Activated B cell treated with CpG ODN at 0.5 μM for 24 hours (primary cell): ENCODE measurements at regions of chr6 and their contacts with region 1.

Region 1: GRCh38 chr6:42563697-42564505 is at the start of gene UBR2:
- DNase-seq: peak; percentile 73
- ATAC-seq: peak; percentile 96
- H3K4me3 Mint-ChIP-seq: peak within 1 kb of the TSS; percentile 92
- H3K27ac Mint-ChIP-seq: peak within 1 kb of the TSS; percentile 92
- H3K4me1 Mint-ChIP-seq: peaks cover 43% of the 10 kb centered on the region
- H3K27me3 Mint-ChIP-seq: no peaks in the 10 kb centered on the region
- CTCF ChIP-seq: no peak
- total RNA-seq, gene UBR2: 34.3 and 40.8 TPM in 2 replicates

Region 2: GRCh38 chr6:42269553-42269952 is 294.3 kb before region 1 on chr6:
- CTCF ChIA-PET with region 1: no interaction called
- POLR2A ChIA-PET with region 1: no interaction called
- intact Hi-C with region 1: no loop called
- DNase-seq: no peak
- ATAC-seq: peak; percentile 97
- H3K4me3 Mint-ChIP-seq: no peak overlapping the region
- H3K27ac Mint-ChIP-seq: peak overlapping the region; percentile 53
- H3K4me1 Mint-ChIP-seq: peaks cover 20% of the 10 kb centered on the region
- H3K27me3 Mint-ChIP-seq: no peaks in the 10 kb centered on the region
- CTCF ChIP-seq: no peak

Region 3: GRCh38 chr6:42294759-42295158 is 269.1 kb before region 1 on chr6:
- CTCF ChIA-PET with region 1: no interaction called
- POLR2A ChIA-PET with region 1: no interaction called
- intact Hi-C with region 1: no loop called
- DNase-seq: no peak
- ATAC-seq: no peak
- H3K4me3 Mint-ChIP-seq: no peak overlapping the region
- H3K27ac Mint-ChIP-seq: no peak overlapping the region
- H3K4me1 Mint-ChIP-seq: peaks cover 6% of the 10 kb centered on the region
- H3K27me3 Mint-ChIP-seq: no peaks in the 10 kb centered on the region
- CTCF ChIP-seq: no peak

Region 4: GRCh38 chr6:42460883-42461282 is 103.0 kb before region 1 on chr6:
- CTCF ChIA-PET with region 1: no interaction called
- POLR2A ChIA-PET with region 1: no interaction called
- intact Hi-C with region 1: no loop called
- DNase-seq: no peak
- ATAC-seq: no peak
- H3K4me3 Mint-ChIP-seq: no peak overlapping the region
- H3K27ac Mint-ChIP-seq: no peak overlapping the region
- H3K4me1 Mint-ChIP-seq: no peaks in the 10 kb centered on the region
- H3K27me3 Mint-ChIP-seq: peaks cover 4% of the 10 kb centered on the region
- CTCF ChIP-seq: no peak

Region 5: GRCh38 chr6:43516697-43517504 is 953.0 kb after region 1 on chr6 and contains the starts of genes POLR1C and YIPF3:
- CTCF ChIA-PET with region 1: no interaction called
- POLR2A ChIA-PET with region 1: no interaction called
- intact Hi-C with region 1: loop called (anchors 10 kb)
- DNase-seq: peak; percentile 87
- ATAC-seq: peak; percentile 94
- H3K4me3 Mint-ChIP-seq: no peak within 1 kb of the TSS
- H3K27ac Mint-ChIP-seq: peak within 1 kb of the TSS; percentile 54
- H3K4me1 Mint-ChIP-seq: peaks cover 29% of the 10 kb centered on the region
- H3K27me3 Mint-ChIP-seq: no peaks in the 10 kb centered on the region
- CTCF ChIP-seq: no peak
- total RNA-seq, gene POLR1C: 67.7 and 75.6 TPM in 2 replicates
- total RNA-seq, gene YIPF3: 51.7 and 59.1 TPM in 2 replicates